ENCODE measurements at regions of chr6 and their contacts with region 1.

Region 1: DNA sequence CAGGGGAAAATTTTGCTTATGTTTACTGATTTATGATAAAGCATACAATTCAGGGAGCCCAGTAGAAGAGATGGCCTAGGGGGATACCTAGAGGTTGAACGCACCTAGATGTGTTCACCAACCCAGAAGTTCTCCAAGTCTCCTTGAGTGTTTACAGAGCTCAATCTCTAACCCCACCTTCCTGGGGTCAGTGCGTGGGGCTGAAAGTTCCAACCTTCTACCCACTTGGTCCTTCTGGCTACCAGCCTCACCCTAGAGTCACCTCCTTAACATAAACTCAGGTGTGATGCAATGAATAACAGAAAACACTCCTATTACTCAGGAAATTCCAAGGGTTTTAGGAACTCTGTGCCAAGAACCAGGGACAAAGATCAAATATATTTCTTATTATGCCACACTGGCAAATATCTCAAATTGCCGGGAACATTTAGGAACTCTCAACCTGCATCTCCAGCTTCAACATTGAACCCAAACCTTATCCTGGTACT is 26.4 kb downstream of the AFG1L start:
- DNase-seq: no peak
- H3K4me3 ChIP-seq: no peak overlapping the region
- H3K27ac ChIP-seq: no peak overlapping the region
- H3K4me1 ChIP-seq: no peaks in the 10 kb centered on the region
- H3K27me3 ChIP-seq: no peaks in the 10 kb centered on the region
- CTCF ChIP-seq: no peak
- EP300 ChIP-seq: no peak
- POLR2A ChIP-seq: no peak

Region 2: GRCh38 chr6:107691062-107691751 is 630.1 kb before region 1 on chr6:
- intact Hi-C with region 1: loop called in 1 of 4 experiments (anchors 10 kb)
- DNase-seq: peak; percentile 49 to 67 (median 57)
- H3K4me3 ChIP-seq: no peak overlapping the region
- H3K27ac ChIP-seq: no peak overlapping the region
- H3K4me1 ChIP-seq: peaks cover 10% of the 10 kb centered on the region
- H3K27me3 ChIP-seq: no peaks in the 10 kb centered on the region
- CTCF ChIP-seq: no peak
- EP300 ChIP-seq: no peak
- POLR2A ChIP-seq: no peak

Measured in ovary (tissue), 10 donors.